H1 (cell line): ENCODE measurements at regions of chr20 and their contacts with region 1.

Region 1: GRCh38 chr20:35303735-35304491 is 11.7 kb upstream of the FAM83C start:
- DNase-seq: peak; percentile 92 to 93
- H3K4me3 ChIP-seq: peak overlapping the region in 2 of 4 experiments; percentile 20 to 30; a peak in 3 of 8 replicates
- H3K27ac ChIP-seq: no peak overlapping the region
- H3K4me1 ChIP-seq: peaks cover 0 to 4% (median 2%) of the 10 kb centered on the region in 4 experiments; a peak in 2 of 7 replicates
- H3K27me3 ChIP-seq: no peaks in the 10 kb centered on the region
- CTCF ChIP-seq: peak; percentile 93 to 99 (median 96)
- EP300 ChIP-seq: peak in 1 of 2 experiments; percentile 20; a peak in 1 of 3 replicates
- POLR2A ChIP-seq: no peak
- RAD21 ChIP-seq: peak; percentile 89 to 92

Region 2: GRCh38 chr20:35120012-35120701 is 183.8 kb before region 1 on chr20:
- CTCF ChIA-PET with region 1: no interaction called
- POLR2A ChIA-PET with region 1: no interaction called
- DNase-seq: no peak
- H3K4me3 ChIP-seq: no peak overlapping the region
- H3K27ac ChIP-seq: no peak overlapping the region
- H3K4me1 ChIP-seq: no peaks in the 10 kb centered on the region
- H3K27me3 ChIP-seq: no peaks in the 10 kb centered on the region
- CTCF ChIP-seq: no peak
- EP300 ChIP-seq: no peak
- POLR2A ChIP-seq: no peak
- RAD21 ChIP-seq: no peak

Region 3: GRCh38 chr20:35146920-35147574 is 156.9 kb before region 1 on chr20 and contains the start of gene EDEM2:
- CTCF ChIA-PET with region 1: interaction called, 20 read pairs
- POLR2A ChIA-PET with region 1: no interaction called
- DNase-seq: peak; percentile 96 to 97
- H3K4me3 ChIP-seq: peak within 1 kb of the TSS; percentile 86 to 94 (median 90)
- H3K27ac ChIP-seq: peak within 1 kb of the TSS; percentile 68; the same call in 1 of the 2 replicates
- H3K4me1 ChIP-seq: 0 out of 7 replicates have a peak, but pooled peaks cover 0 to 3% (median 0%) of the 10 kb centered on the region in 4 experiments
- H3K27me3 ChIP-seq: no peaks in the 10 kb centered on the region
- CTCF ChIP-seq: 0 out of 4 replicates have a peak, but pooled peaks of 1 of the 3 experiments have one; percentile 4
- EP300 ChIP-seq: no peak
- POLR2A ChIP-seq: peak in 1 of 2 experiments; percentile 57; a peak in 2 of 3 replicates
- RAD21 ChIP-seq: peak in 1 of 2 experiments; percentile 29; a peak in 2 of 4 replicates
- total RNA-seq, gene EDEM2: 19.6 and 21.5 TPM in 2 replicates

Region 4: DNA sequence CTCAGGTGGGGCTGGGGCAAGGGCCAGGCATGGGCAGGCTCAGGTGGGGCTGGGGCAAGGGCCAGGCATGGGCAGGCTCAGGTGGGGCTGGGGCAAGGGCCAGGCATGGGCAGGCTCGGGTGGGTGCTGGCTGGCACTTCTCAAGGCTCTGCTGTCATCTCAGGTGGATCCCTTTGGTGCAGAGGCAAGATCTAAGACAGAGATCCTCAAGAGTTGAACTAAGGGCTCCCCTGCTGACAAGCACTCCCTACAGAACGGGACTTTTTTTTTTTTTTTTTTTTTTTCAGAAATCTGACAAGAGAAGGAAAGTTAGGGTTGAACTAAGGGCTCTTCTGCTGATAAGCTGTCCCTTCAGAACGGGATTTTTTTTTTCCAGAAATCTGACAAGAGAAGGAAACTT is 50.9 kb before region 1 on chr20:
- CTCF ChIA-PET with region 1: no interaction called
- POLR2A ChIA-PET with region 1: no interaction called
- DNase-seq: no peak
- H3K4me3 ChIP-seq: no peak overlapping the region
- H3K27ac ChIP-seq: no peak overlapping the region
- H3K4me1 ChIP-seq: 0 out of 7 replicates have a peak, but pooled peaks cover 0 to 2% (median 0%) of the 10 kb centered on the region in 4 experiments
- H3K27me3 ChIP-seq: no peaks in the 10 kb centered on the region
- CTCF ChIP-seq: no peak
- EP300 ChIP-seq: no peak
- POLR2A ChIP-seq: no peak
- RAD21 ChIP-seq: no peak

Region 5: GRCh38 chr20:35318502-35319157 is 14.7 kb after region 1 on chr20:
- CTCF ChIA-PET with region 1: interaction called, 106 read pairs
- POLR2A ChIA-PET with region 1: interaction called, 4 read pairs
- DNase-seq: no peak
- H3K4me3 ChIP-seq: no peak overlapping the region
- H3K27ac ChIP-seq: no peak overlapping the region
- H3K4me1 ChIP-seq: peaks cover 3 to 9% (median 3%) of the 10 kb centered on the region in 4 experiments; a peak in 6 of 7 replicates
- H3K27me3 ChIP-seq: no peaks in the 10 kb centered on the region; a peak in 2 of 7 replicates
- CTCF ChIP-seq: no peak
- EP300 ChIP-seq: no peak
- POLR2A ChIP-seq: no peak
- RAD21 ChIP-seq: no peak

Region 6: GRCh38 chr20:35344354-35344837 is 40.5 kb after region 1 on chr20:
- CTCF ChIA-PET with region 1: interaction called, 21 read pairs
- POLR2A ChIA-PET with region 1: no interaction called
- DNase-seq: no peak
- H3K4me3 ChIP-seq: no peak overlapping the region
- H3K27ac ChIP-seq: no peak overlapping the region
- H3K4me1 ChIP-seq: no peaks in the 10 kb centered on the region
- H3K27me3 ChIP-seq: no peaks in the 10 kb centered on the region
- CTCF ChIP-seq: no peak
- EP300 ChIP-seq: no peak
- POLR2A ChIP-seq: no peak
- RAD21 ChIP-seq: no peak

Region 7: GRCh38 chr20:35447082-35447789 is 143.3 kb after region 1 on chr20:
- CTCF ChIA-PET with region 1: interaction called, 10 read pairs
- POLR2A ChIA-PET with region 1: interaction called, 5 read pairs
- DNase-seq: peak; percentile 69 to 100
- H3K4me3 ChIP-seq: peak overlapping the region in 1 of 4 experiments; percentile 54; a peak in 3 of 8 replicates
- H3K27ac ChIP-seq: no peak overlapping the region
- H3K4me1 ChIP-seq: peaks cover 0 to 3% (median 0%) of the 10 kb centered on the region in 4 experiments; a peak in 1 of 7 replicates
- H3K27me3 ChIP-seq: no peaks in the 10 kb centered on the region
- CTCF ChIP-seq: peak; percentile 79 to 89 (median 87)
- EP300 ChIP-seq: no peak
- POLR2A ChIP-seq: no peak
- RAD21 ChIP-seq: peak; percentile 41 to 65